HEK293T (cell line): ENCODE measurements at regions of chr6 and their contacts with region 1.

Region 1: GRCh38 chr6:112029045-112029822 is 24.7 kb upstream of the CCN6 start:
- DNase-seq: peak; percentile 79

Region 2: DNA sequence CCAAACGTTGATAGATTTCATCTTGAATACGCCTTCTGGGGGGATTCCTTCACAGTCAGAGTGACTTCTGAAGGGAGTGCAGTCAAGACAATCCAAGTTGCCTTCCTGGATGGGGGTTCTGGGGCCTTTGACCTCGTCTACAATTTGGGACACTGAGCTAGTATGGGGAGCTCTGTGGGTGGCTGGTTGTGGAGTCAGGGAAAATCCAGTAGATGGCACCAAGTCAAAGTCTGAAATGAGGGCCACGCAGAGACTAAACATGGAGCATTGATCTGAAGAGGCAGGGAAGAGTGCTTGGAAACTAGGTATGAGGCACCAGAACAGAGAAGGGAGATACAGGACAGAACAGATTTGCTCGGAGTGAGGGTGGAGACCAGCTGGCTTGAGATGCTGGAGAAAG is 18.9 kb before region 1 on chr6:
- CTCF ChIA-PET with region 1: interaction called, 11 read pairs
- POLR2A ChIA-PET with region 1: no interaction called
- DNase-seq: no peak

Region 3: GRCh38 chr6:112018619-112019416 is 10.4 kb before region 1 on chr6:
- CTCF ChIA-PET with region 1: interaction called, 10 read pairs
- POLR2A ChIA-PET with region 1: no interaction called
- DNase-seq: peak; percentile 55